Sciatic nerve (tissue), 2 donors: ENCODE measurements at regions of chr20 and their contacts with region 1.

Region 1: GRCh38 chr20:21465799-21466198 is 48.1 kb downstream of the NKX2-2 start:
- DNase-seq: no peak
- ATAC-seq: no peak

Region 2: GRCh38 chr20:21894579-21894978 is 428.8 kb after region 1 on chr20:
- intact Hi-C with region 1: loop called (anchors 10 kb)
- DNase-seq: no peak
- ATAC-seq: no peak